ENCODE measurements at regions of chr22 and their contacts with region 1.

Region 1: GRCh38 chr22:17121227-17122195 is at the start of gene TMEM121B:
- H3K4me3 Mint-ChIP-seq: peak within 1 kb of the TSS; percentile 82
- H3K27ac Mint-ChIP-seq: no peak within 1 kb of the TSS
- H3K4me1 Mint-ChIP-seq: peaks cover 49% of the 10 kb centered on the region
- H3K27me3 Mint-ChIP-seq: peaks cover 17% of the 10 kb centered on the region

Region 2: DNA sequence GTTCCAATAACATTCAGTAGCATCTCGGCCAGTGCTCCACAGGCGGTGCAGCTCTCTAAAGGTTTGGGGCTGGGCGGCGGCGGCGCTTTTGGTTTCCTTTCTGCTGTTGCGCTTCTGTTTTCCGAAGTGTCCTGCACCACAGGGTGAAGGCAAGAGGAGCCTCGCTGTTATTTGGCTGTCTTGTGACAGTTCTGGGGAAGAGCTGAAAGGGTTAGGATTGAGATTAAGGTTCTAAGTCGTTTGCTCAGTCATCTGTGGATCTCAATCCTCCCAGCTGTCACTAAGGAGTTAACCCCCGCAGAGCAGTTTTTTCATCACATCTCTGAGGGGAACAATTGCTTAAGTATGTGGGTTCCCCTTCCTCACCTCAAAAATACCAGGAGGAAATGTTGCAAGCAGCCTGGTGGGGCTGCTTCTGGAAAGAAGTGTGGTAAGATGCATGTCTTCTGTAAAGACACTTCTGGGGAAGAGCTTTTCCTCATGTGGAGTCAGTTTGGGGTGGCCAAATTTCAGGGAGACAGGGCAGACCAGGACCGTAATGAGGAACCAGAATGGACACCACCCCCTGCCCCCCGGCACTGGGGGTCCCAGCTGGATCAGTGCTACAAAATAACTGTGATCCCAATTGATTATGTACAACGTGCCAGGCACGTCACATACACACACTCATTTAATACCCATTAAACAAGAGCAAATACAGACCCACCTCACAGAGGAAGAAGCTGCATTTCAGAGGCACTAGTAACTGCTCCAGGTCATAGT is 14.5 kb before region 1 on chr22:
- intact Hi-C with region 1: loop called (anchors 2 kb)
- H3K4me3 Mint-ChIP-seq: peak overlapping the region; percentile 60
- H3K27ac Mint-ChIP-seq: peak overlapping the region; percentile 91
- H3K4me1 Mint-ChIP-seq: peaks cover 87% of the 10 kb centered on the region
- H3K27me3 Mint-ChIP-seq: no peaks in the 10 kb centered on the region

Region 3: DNA sequence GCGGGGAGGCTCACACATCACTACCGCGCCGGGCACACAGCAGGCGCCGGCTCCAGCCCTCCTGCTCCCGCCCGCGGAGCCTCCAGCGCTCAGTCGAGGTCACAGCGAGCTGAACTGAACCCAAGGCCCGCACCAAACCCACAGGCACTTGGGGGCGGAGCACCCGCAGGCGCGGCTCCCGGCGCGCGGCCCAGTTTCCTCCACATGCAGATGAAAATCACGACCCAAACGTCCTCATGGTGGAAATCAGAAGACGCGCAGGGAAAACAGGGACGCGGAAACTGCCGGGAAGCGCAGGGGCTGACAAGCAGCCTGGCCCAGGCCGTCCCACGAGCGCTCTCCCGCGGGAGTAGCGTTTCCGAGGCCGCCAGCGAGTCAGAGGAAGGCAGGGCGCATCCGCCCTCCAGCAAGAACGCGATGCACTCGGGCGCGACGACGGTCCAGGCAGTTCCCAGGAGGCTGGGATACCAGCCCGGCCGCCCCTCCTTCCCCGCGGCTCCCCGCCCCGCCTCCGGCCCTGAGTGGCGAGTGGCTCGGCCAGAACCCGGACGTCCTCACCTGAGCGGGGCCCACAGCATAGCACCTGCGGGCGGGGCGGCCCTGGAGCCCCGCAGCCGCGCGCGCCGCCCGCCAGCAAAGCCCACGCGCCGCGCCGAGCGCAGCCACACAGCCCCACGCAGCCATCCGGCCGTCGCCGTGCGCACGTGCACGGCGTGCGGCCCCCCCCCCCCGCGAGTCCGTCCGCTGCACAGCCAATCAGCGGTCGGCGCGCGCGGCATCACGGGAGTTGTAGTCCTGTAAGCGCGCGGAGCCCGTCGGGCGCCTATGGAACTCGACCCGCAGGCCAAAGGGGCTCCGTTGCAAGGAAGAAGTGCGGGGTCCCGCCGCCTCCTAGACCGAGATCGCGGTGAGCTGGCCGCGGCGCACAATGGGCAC is 37.3 kb after region 1 on chr22 and contains the start of gene HDHD5:
- intact Hi-C with region 1: loop called (anchors 5 kb)
- H3K4me3 Mint-ChIP-seq: peak within 1 kb of the TSS; percentile 88
- H3K27ac Mint-ChIP-seq: peak within 1 kb of the TSS; percentile 88
- H3K4me1 Mint-ChIP-seq: peaks cover 45% of the 10 kb centered on the region
- H3K27me3 Mint-ChIP-seq: no peaks in the 10 kb centered on the region

Region 4: GRCh38 chr22:17191163-17191784 is 69.8 kb after region 1 on chr22:
- intact Hi-C with region 1: no loop called
- H3K4me3 Mint-ChIP-seq: no peak overlapping the region
- H3K27ac Mint-ChIP-seq: no peak overlapping the region
- H3K4me1 Mint-ChIP-seq: peaks cover 21% of the 10 kb centered on the region
- H3K27me3 Mint-ChIP-seq: no peaks in the 10 kb centered on the region